ENCODE measurements at regions of chr5 and their contacts with region 1.

Region 1: DNA sequence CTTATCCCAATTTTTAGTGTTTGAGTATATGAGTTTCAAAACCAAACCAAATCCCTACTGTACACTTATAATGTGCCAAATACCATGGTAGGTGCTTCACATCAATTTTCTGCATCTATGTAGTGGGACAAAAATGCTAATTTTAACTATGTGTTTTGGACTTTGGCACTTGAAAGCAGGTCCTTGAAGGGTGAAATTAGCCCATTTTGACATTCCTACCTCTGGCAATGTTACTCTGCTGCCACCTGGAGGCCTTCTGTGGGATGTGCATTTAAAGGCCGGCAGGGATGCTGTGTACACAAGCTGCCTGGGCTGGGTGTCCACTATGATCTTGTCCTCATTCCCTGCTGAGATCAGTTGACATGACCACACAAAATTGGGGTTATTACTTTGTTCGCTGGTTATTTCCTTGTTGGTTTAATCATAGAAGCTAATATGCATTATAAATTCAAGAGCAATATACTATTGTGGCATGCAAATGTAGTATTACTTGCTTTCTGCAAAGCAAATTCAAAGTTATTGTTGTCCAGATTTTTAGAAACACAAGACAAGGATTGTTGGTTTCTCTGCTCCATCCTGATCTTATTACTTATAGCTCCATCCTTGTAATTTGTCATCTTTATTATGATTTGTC is 166.8 kb downstream of the ARHGEF28 start:
- DNase-seq: peak; percentile 80 to 87 (median 81)
- H3K4me3 ChIP-seq: no peak overlapping the region
- H3K27ac ChIP-seq: no peak overlapping the region
- H3K4me1 ChIP-seq: peaks cover 0 to 10% (median 0%) of the 10 kb centered on the region in 3 donors
- H3K27me3 ChIP-seq: no peaks in the 10 kb centered on the region
- CTCF ChIP-seq: peak; percentile 99

Region 2: DNA sequence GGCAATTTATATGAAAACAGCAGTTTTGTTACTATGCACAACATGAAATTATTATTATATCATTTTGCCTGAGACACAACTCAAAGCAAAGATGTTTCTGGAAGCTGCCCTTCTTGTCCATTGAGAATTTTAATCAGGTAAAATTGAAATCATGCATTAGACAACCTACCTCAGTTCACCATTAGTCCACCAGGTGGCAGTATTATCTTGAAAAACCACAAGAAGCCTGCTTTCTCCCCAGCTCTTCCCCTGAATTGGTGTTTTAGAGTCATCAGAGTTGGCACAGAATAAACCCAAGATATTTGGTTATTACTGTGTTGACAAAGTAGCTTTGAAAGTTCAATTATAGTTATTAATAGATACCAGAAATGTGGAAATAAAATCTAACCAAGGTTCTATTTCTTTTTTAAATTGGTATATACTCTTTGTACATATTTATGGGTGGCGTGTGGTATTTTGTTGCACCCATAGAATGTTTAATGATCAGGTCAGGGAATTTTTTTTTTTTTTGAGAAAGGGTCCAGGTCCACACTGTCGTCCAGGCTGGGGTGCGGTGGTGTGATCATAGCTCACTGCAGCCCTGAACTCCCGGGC is 201.6 kb before region 1 on chr5:
- intact Hi-C with region 1: loop called (anchors 5 kb)
- DNase-seq: peak in 3 of 5 donors; percentile 53 to 88 (median 84)
- H3K4me3 ChIP-seq: no peak overlapping the region
- H3K27ac ChIP-seq: no peak overlapping the region
- H3K4me1 ChIP-seq: peaks cover 0 to 3% (median 0%) of the 10 kb centered on the region in 3 donors
- H3K27me3 ChIP-seq: no peaks in the 10 kb centered on the region
- CTCF ChIP-seq: peak; percentile 89

Region 3: DNA sequence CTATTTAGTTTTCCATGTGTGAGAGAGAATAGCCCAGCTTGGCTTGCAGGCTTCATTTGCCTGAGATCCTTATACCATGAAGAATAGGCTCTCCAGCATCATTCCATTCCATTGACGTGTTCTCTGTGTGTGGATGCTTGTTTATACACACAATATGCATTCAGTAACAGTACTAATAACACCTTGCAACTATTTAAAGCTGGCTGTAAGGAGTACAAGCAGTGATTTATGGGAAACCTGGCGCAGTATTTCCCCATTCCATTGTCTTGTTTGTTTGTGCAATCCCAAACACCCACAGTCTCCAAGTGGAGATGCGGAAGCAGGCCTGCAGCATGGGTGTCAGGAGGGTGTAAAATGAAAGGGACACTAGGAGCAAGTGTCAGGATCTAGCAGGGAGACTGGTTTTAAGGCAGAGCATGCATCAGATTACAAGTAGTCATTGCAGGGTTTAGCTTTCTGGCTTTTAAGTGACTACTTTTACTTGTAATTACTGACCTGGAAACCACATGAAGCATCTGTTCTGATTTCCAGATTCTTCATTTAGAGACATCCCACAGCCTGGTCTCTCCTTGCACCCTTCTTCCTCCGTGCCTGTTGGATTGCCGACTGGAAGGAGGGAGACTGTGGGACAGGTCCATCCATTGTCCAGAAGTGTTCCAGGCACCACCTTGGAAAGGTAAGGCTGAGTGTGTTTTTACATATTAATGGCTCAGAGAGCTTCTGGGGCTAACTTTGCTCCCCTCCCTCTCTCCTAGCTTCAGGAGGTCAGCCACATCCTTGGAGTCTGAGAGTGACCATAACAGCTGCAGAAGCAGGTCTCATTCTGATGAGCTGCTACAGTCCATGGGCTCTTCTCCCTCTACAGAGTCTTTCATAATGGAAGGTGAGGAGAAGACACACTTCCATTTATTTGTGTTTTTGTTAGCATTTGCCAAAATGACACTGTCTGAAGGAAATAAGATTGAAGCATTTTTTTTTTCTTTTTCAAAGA is 74.8 kb after region 1 on chr5:
- intact Hi-C with region 1: no loop called
- DNase-seq: no peak
- H3K4me3 ChIP-seq: no peak overlapping the region
- H3K27ac ChIP-seq: no peak overlapping the region
- H3K4me1 ChIP-seq: peaks cover 0 to 4% (median 0%) of the 10 kb centered on the region in 3 donors
- H3K27me3 ChIP-seq: no peaks in the 10 kb centered on the region
- CTCF ChIP-seq: no peak

Measured in kidney (tissue), 22 donors.